ENCODE measurements at regions of chr5 and their contacts with region 1.

Region 1: GRCh38 chr5:151786468-151786867 is 14.7 kb downstream of the G3BP1 start:
- DNase-seq: no peak
- H3K4me3 ChIP-seq: no peak overlapping the region
- H3K27ac ChIP-seq: no peak overlapping the region
- H3K4me1 ChIP-seq: peaks cover 0 to 4% (median 2%) of the 10 kb centered on the region in 4 experiments; a peak in 1 of 7 replicates
- H3K27me3 ChIP-seq: no peaks in the 10 kb centered on the region
- CTCF ChIP-seq: no peak
- EP300 ChIP-seq: no peak
- POLR2A ChIP-seq: no peak
- RAD21 ChIP-seq: no peak

Region 2: DNA sequence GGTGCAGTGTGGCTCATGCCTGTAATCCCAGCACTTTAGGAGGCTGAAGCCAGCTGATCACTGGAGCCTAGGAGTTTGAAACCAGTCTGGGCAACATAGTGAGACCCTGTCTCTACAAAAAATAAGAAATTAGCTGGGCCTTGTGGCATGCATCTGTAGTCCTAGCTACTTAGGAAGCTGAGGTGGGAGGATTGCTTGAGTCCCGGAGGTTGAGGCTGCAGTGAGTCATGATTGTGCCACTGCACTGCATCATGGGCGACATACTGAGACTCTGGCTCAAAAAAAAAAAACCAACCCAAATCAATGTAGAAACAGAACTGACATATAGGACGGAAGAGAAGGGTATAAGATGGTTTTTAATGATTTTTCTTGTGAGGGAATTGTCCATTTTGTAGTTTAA is 12.9 kb after region 1 on chr5:
- CTCF ChIA-PET with region 1: interaction called, 10 read pairs
- POLR2A ChIA-PET with region 1: interaction called, 6 read pairs
- DNase-seq: no peak
- H3K4me3 ChIP-seq: no peak overlapping the region
- H3K27ac ChIP-seq: no peak overlapping the region
- H3K4me1 ChIP-seq: no peaks in the 10 kb centered on the region
- H3K27me3 ChIP-seq: no peaks in the 10 kb centered on the region
- CTCF ChIP-seq: no peak
- EP300 ChIP-seq: no peak
- POLR2A ChIP-seq: no peak
- RAD21 ChIP-seq: no peak

Region 3: GRCh38 chr5:151847871-151848270 is 61.4 kb after region 1 on chr5:
- CTCF ChIA-PET with region 1: no interaction called
- POLR2A ChIA-PET with region 1: no interaction called
- DNase-seq: no peak
- H3K4me3 ChIP-seq: no peak overlapping the region
- H3K27ac ChIP-seq: no peak overlapping the region
- H3K4me1 ChIP-seq: no peaks in the 10 kb centered on the region
- H3K27me3 ChIP-seq: no peaks in the 10 kb centered on the region; a peak in 1 of 7 replicates
- CTCF ChIP-seq: no peak
- EP300 ChIP-seq: no peak
- POLR2A ChIP-seq: no peak
- RAD21 ChIP-seq: no peak

Measured in H1 (cell line).